Posterior cingulate gyrus (tissue), 11 donors: ENCODE measurements at regions of chr10 and their contacts with region 1.

Region 1: GRCh38 chr10:97731346-97732051 is 5.4 kb upstream of the ZFYVE27 start:
- DNase-seq: peak in 6 of 10 donors; percentile 55 to 89 (median 75)

Region 2: GRCh38 chr10:97676770-97677581 is 54.5 kb before region 1 on chr10:
- intact Hi-C with region 1: loop called (anchors 1 kb)
- DNase-seq: peak in 2 of 10 donors; percentile 49 to 90

Region 3: DNA sequence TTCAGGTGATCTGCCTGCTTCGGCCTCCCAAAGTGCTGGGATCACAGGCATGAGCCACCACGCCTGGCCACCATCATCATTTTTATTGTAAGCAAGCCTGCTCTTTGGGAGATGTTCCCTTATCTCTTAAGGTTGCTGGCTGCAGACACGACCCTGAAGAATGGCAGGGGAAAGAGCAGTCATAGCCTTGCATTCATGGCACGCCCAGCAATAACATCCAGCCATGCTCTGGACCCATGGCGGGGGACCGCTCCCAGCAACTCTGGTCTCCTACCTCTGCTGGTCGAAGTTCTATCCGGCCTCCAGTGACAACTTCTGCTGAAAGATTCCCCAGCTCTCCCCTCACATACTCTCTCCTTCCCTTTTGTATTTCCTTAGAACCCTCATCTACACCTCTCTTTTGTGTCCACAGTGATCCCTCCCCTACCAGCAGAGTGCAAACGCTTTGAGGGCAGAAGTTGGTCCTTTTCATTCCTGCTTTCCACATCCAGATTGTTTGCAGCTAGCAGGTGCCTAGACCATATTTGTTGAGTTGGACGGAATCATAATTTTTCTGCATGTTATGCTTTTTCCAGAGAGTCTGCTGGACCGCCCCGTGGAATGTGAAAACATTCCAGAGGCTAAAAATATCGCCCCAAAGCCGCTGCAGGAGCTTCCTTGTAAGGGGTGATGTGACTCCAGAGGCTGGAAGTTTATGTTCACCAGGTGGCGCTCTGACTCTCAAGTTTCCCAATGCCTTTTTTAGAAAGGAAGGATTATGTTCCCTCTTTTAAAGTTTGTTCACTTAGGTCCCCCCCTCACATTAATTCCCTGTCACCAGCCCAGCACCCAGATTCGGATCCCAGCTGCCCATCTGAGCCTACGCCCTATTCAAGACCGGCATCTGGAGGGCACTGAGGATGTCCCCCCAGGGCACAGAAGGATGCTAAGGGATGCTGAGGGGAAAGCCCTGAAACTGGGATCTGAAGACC is 22.2 kb before region 1 on chr10:
- intact Hi-C with region 1: loop called (anchors 1 kb)
- DNase-seq: peak in 7 of 10 donors; percentile 31 to 80 (median 54)